Gastrocnemius medialis (tissue), 4 donors: ENCODE measurements at regions of chr1 and their contacts with region 1.

Region 1: GRCh38 chr1:78229344-78229743 is 183.6 kb downstream of the GIPC2 start:
- DNase-seq: peak; percentile 20 to 30
- ATAC-seq: peak; percentile 80 to 88
- H3K4me3 ChIP-seq: no peak overlapping the region
- H3K27ac ChIP-seq: peak overlapping the region in 2 of 4 donors; percentile 7 to 40
- H3K4me1 ChIP-seq: peaks cover 0 to 2% of the 10 kb centered on the region in 2 donors
- H3K27me3 ChIP-seq: no peaks in the 10 kb centered on the region
- CTCF ChIP-seq: no peak
- POLR2A ChIP-seq: no peak

Region 2: GRCh38 chr1:78032996-78033796 is 196.1 kb before region 1 on chr1:
- in situ Hi-C with region 1: no loop called
- intact Hi-C with region 1: no loop called
- DNase-seq: no peak
- ATAC-seq: no peak
- H3K4me3 ChIP-seq: no peak overlapping the region
- H3K27ac ChIP-seq: no peak overlapping the region
- H3K4me1 ChIP-seq: peaks cover 1 to 4% of the 10 kb centered on the region in 2 donors
- H3K27me3 ChIP-seq: no peaks in the 10 kb centered on the region
- CTCF ChIP-seq: no peak
- POLR2A ChIP-seq: no peak

Region 3: DNA sequence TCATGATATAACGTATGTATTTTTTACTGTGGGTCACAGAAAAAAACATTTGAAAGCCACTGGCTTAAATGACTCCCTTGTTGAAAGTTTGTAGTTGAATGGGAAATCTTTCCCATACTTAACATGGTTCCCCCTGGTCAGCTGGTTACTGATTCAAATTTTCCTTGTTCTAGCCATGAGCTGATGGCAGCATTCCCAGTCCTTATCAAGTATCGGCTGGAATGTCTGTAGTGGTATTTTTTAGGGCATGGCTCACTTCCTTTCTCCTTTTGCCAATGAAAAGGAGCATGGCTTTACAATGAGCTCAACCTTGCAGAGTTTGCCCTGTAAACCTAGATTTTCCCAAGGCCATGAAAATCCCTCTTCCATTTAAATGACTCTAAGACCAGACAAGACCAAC is 127.8 kb before region 1 on chr1:
- in situ Hi-C with region 1: no loop called
- intact Hi-C with region 1: no loop called
- DNase-seq: no peak
- ATAC-seq: peak; percentile 68 to 81
- H3K4me3 ChIP-seq: no peak overlapping the region
- H3K27ac ChIP-seq: peak overlapping the region; percentile 5 to 64 (median 35)
- H3K4me1 ChIP-seq: peaks cover 19 to 22% of the 10 kb centered on the region in 2 donors
- H3K27me3 ChIP-seq: no peaks in the 10 kb centered on the region
- CTCF ChIP-seq: no peak
- POLR2A ChIP-seq: no peak

Region 4: DNA sequence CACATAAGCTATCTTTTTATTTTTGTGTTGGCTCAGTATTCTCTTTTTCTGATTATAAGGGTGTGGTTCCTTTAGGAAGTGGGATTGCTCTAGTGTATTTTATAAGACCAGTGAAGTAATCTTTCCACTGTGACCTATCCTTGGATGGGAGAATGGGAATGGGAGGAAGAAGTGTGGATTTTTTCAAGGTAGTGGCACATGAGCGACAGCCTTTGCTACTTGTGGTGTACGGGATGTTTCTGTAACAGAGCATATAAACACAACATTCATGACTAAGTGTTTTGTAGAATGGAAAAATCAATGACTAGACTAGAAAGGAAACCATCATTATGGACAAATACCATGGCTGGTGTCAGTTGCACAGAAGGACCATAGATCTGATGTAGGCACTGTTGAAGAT is 26.0 kb after region 1 on chr1:
- in situ Hi-C with region 1: no loop called
- intact Hi-C with region 1: loop called (anchors 1 kb)
- DNase-seq: no peak
- ATAC-seq: peak; percentile 51 to 72
- H3K4me3 ChIP-seq: no peak overlapping the region
- H3K27ac ChIP-seq: peak overlapping the region in 2 of 4 donors; percentile 12 to 29
- H3K4me1 ChIP-seq: no peaks in the 10 kb centered on the region
- H3K27me3 ChIP-seq: no peaks in the 10 kb centered on the region
- CTCF ChIP-seq: no peak
- POLR2A ChIP-seq: no peak